Sciatic nerve (tissue), 2 donors: ENCODE measurements at regions of chr9 and their contacts with region 1.

Region 1: DNA sequence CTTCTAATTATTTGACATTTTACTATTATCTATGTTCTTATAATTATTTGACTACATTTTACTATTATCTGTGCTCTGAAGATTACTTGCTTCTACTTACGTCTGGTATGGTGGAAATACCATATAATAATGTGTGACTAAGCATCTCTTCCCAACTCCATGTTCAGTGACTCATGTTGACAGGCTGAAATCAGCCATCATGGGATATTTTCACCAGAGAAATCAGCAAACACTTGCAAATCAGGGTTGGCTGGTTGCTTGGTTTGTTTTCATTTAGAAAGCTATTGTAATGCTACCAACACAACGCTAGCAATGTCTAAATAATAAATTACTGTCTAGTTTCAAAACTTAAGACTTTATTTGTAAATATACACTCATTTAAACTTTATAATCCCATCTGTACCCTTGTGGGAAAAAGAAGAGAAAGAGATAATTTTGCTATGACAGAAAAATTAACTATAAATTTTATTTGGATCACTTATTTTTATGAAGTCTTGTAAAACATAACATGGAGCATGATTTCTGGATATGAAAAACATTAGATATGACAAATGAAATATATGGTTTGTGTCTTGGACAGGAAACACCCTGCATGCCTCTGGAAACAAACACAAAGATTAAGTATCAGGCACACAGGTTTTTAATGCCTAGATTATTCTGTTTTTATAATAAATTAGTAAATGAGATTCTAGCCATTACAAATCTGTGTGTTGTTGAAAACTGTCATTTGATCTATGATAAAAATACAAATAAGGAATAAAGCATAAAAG is 337.6 kb downstream of the BNC2 start:
- DNase-seq: no peak
- ATAC-seq: no peak

Region 2: DNA sequence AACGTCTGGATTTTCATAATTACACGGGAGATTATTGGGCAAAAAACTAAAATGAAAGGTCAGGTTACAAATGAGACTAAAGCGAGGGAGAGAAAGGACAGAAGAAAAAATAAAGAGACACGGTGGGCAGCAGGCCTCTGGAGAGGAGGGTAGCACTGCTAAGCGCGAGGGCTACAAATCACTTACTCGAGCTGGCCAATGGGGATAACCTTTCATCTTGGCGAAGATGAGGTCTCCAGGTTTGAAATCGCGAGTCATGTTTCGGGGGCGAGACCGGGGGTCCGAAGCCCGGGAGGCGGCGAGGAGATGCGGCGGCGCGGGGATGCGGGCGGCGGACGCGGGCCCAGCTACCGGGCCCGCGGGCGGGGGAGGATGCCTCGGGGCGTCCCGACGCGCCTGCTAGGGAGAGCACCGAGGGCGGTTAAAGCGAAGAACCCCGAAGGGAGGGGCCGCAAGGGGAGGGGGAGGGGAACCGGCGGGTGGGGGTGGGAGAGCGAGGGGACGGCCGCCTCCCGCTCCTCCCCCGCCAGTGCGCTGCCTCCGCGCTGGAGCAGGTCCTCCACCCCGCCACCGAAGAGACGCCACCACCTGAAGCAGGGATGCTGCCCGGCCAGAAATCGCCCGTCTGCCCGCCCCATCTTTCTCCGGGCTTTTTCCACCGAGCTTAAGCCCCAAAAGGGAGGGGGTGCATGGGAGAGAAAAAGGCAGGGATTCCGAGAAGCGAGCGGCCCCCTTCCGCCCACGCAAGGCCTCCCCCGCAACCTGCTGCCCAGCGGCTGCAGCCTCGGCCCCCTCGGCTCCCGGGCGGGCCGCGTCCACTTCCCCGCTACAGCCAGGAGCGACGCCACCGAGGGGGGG is 1022.7 kb before region 1 on chr9:
- intact Hi-C with region 1: loop called (anchors 5 kb)
- DNase-seq: peak; percentile 69
- ATAC-seq: peak; percentile 38

Region 3: DNA sequence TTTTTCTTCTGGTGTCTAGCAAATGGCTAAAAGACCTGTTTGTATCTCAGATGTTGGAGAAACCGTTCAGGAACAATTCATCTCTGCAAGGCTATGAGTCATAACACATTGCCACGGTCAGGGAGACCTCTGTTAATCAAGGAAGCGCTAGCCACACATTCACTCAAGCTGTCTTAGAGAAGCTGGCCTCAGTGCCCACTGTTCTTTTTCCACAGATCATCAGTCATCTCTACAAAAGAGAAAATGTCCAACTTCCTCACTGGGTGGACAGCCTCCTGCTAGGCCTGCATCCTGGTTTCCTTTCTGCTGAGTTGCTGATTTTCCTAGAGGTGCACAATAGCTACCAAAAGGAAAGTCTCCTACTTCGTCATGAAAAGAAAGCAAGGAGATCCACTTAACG is 22.9 kb before region 1 on chr9:
- intact Hi-C with region 1: no loop called
- DNase-seq: no peak
- ATAC-seq: peak; percentile 37

Region 4: DNA sequence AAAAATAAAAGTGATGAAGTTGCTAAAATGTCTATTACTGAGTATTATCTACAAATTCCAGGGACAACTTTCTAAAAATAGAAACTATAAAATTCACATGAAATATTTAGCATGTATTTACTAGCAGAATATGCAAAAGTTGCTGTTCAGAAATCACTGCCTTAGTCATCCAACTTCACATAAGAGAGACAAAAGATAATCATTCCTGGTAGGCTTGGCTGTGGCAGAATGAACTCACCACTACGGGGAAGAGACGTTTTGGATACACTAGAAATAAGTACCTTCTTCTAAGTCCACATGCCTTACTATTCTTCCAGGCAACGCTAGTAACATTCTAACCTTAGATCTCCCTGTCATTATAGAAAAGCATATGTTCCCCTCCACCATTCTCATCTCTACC is 65.5 kb after region 1 on chr9:
- intact Hi-C with region 1: no loop called
- DNase-seq: no peak
- ATAC-seq: no peak

Region 5: DNA sequence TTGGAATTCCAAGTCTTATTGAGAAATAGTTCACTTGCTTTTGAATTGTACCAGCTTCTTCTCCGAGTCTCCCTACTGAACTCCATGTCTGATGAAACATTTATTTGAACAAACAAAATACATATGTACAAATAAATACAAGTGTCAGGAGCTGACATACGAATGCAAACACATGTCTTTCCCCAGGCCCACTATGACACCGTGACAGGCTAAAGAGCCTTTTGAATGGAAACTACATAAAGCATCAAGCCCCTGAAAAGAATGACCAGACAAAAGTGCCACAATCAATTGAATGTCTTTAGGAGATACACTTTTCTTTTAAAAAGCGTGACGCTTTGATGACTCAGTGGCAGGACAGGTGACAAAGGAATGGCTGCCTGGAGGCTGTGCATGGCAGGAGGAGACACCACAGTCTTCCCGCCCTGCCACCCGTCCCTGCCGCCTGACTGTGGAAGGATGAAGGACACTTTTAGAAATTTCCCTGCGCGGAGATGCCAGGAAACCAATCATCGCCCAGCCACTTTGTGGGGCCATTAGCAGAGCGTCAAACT is 450.0 kb after region 1 on chr9:
- intact Hi-C with region 1: no loop called
- DNase-seq: no peak
- ATAC-seq: no peak